T-cell (primary cell): ENCODE measurements at regions of chr1 and their contacts with region 1.

Region 1: GRCh38 chr1:55140546-55140983 is 74.6 kb downstream of the USP24 start:
- DNase-seq: peak in 33 of 35 experiments; percentile 30 to 86 (median 62)
- ATAC-seq: peak; percentile 94 to 95 (median 94)
- H3K4me3 ChIP-seq: no peak overlapping the region
- H3K4me3 Mint-ChIP-seq: no peak overlapping the region
- H3K27ac ChIP-seq: no peak overlapping the region
- H3K27ac Mint-ChIP-seq: peak overlapping the region; percentile 47 to 70
- H3K4me1 ChIP-seq: no peaks in the 10 kb centered on the region
- H3K4me1 Mint-ChIP-seq: peaks cover 7 to 17% (median 14%) of the 10 kb centered on the region in 3 donors
- H3K27me3 ChIP-seq: no peaks in the 10 kb centered on the region
- H3K27me3 Mint-ChIP-seq: no peaks in the 10 kb centered on the region

Region 2: DNA sequence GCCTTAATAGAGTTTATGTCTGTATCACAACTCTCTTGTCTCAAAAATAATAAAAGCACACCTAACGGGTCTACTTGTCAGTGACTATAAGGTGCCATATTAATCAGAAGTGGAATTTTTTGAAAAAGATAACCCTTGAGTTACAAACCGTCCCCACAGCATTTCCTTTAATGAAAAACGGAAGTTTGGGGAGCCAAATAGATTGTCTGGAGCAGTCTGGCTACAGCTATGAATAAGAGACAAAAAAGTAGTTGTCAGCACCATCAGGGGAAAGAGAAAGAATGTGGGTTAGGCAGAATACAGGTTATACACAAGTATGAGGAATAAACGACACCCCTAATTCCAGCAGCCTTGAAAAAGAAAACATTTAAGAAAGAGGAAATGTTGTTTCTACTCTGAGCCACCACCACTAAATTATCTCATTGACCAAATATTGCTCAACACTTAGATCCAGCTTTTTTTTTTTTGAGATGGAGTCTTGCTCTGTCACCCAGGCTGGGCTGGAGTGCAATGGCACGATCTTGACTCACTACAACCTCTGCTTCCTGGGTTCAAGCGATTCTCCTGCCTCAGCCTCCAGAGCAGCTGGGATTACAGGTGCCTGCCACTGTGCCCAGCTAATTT is 104.0 kb after region 1 on chr1:
- CTCF ChIA-PET with region 1: no interaction called
- POLR2A ChIA-PET with region 1: no interaction called
- DNase-seq: no peak
- ATAC-seq: no peak
- H3K4me3 ChIP-seq: no peak overlapping the region
- H3K4me3 Mint-ChIP-seq: no peak overlapping the region
- H3K27ac ChIP-seq: no peak overlapping the region
- H3K27ac Mint-ChIP-seq: no peak overlapping the region
- H3K4me1 ChIP-seq: no peaks in the 10 kb centered on the region
- H3K4me1 Mint-ChIP-seq: peaks cover 0 to 3% (median 2%) of the 10 kb centered on the region in 3 donors
- H3K27me3 ChIP-seq: no peaks in the 10 kb centered on the region
- H3K27me3 Mint-ChIP-seq: peaks cover 0 to 4% of the 10 kb centered on the region in 2 donors

Region 3: GRCh38 chr1:55277377-55278130 is 137.0 kb after region 1 on chr1:
- CTCF ChIA-PET with region 1: interaction called, 6 to 14 read pairs
- POLR2A ChIA-PET with region 1: interaction called in 1 of 2 experiments, 5 read pairs
- DNase-seq: peak; percentile 42 to 87 (median 73)
- ATAC-seq: peak; percentile 88 to 94 (median 93)
- H3K4me3 ChIP-seq: no peak overlapping the region
- H3K4me3 Mint-ChIP-seq: no peak overlapping the region
- H3K27ac ChIP-seq: no peak overlapping the region
- H3K27ac Mint-ChIP-seq: peak overlapping the region in 1 of 2 donors; percentile 18
- H3K4me1 ChIP-seq: peaks cover 0 to 5% of the 10 kb centered on the region in 2 experiments
- H3K4me1 Mint-ChIP-seq: peaks cover 3 to 10% (median 6%) of the 10 kb centered on the region in 3 donors
- H3K27me3 ChIP-seq: peaks cover 0 to 6% of the 10 kb centered on the region in 2 experiments
- H3K27me3 Mint-ChIP-seq: no peaks in the 10 kb centered on the region